ENCODE measurements at regions of chr15 and their contacts with region 1.

Region 1: GRCh38 chr15:79989682-79990081 is 18.7 kb upstream of the BCL2A1 start:
- DNase-seq: no peak
- H3K4me3 Mint-ChIP-seq: no peak overlapping the region
- H3K27ac Mint-ChIP-seq: no peak overlapping the region
- H3K4me1 Mint-ChIP-seq: peaks cover 15% of the 10 kb centered on the region
- H3K27me3 Mint-ChIP-seq: peaks cover 15% of the 10 kb centered on the region
- CTCF ChIP-seq: no peak

Region 2: DNA sequence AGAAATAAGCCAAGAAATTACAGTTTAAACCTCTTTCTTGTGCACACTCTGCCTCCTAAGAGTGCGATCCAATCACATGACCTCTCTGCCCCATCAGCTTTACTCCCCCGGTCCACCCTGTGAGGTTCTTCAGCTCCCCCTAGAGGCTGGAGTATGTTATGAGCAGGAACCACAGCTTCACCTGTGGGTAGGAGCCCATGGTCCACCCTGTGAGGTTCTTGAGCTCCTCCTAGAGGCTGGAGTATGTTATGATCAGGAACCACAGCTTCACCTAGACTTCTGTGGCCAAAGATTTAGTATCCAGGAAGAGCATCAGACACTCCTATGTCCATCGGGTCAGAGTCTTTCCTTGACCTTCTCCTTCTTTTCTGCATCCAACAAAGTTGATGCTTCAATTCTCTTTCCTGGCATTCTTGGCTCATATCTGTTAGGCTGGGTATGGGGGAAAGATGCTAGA is 393.6 kb before region 1 on chr15:
- CTCF ChIA-PET with region 1: no interaction called
- intact Hi-C with region 1: loop called (anchors 10 kb)
- DNase-seq: peak; percentile 79
- H3K4me3 Mint-ChIP-seq: no peak overlapping the region
- H3K27ac Mint-ChIP-seq: no peak overlapping the region
- H3K4me1 Mint-ChIP-seq: no peaks in the 10 kb centered on the region
- H3K27me3 Mint-ChIP-seq: peaks cover 68% of the 10 kb centered on the region
- CTCF ChIP-seq: peak; percentile 90

Region 3: DNA sequence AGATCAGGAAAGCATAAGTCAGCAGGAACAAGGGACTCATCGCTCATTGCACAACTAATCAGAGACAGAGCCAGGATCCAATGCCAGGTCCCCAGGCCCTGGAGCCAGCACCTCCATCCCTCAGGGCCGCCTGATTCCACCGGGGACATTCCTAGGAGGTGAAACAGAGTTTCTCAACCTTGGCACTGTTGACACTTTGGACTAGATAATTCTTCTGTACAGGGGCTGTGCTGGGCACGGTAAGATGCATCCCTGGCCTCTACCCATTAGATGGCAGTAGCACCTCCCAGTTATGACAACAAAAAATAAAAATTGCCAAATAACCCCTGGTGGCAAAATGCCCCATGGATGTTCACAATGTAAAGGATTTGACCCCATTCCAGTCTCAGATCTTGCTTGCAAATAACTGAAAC is 220.6 kb before region 1 on chr15:
- CTCF ChIA-PET with region 1: no interaction called
- intact Hi-C with region 1: loop called (anchors 1 kb)
- DNase-seq: peak; percentile 23
- H3K4me3 Mint-ChIP-seq: no peak overlapping the region
- H3K27ac Mint-ChIP-seq: no peak overlapping the region
- H3K4me1 Mint-ChIP-seq: no peaks in the 10 kb centered on the region
- H3K27me3 Mint-ChIP-seq: peaks cover 50% of the 10 kb centered on the region
- CTCF ChIP-seq: peak; percentile 52

Region 4: GRCh38 chr15:79896637-79897379 is 92.9 kb before region 1 on chr15 and contains the start of gene MTHFS:
- CTCF ChIA-PET with region 1: no interaction called
- intact Hi-C with region 1: loop called (anchors 5 kb)
- DNase-seq: peak; percentile 89
- H3K4me3 Mint-ChIP-seq: peak within 1 kb of the TSS; percentile 98
- H3K27ac Mint-ChIP-seq: peak within 1 kb of the TSS; percentile 99
- H3K4me1 Mint-ChIP-seq: peaks cover 23% of the 10 kb centered on the region
- H3K27me3 Mint-ChIP-seq: no peaks in the 10 kb centered on the region
- CTCF ChIP-seq: peak; percentile 57
- total RNA-seq, gene MTHFS: 66.7 and 68.0 TPM in 2 replicates

Region 5: GRCh38 chr15:79923515-79924395 is 65.9 kb before region 1 on chr15:
- CTCF ChIA-PET with region 1: no interaction called
- intact Hi-C with region 1: loop called (anchors 1 kb)
- DNase-seq: peak; percentile 100
- H3K4me3 Mint-ChIP-seq: peak overlapping the region; percentile 100
- H3K27ac Mint-ChIP-seq: peak overlapping the region; percentile 96
- H3K4me1 Mint-ChIP-seq: peaks cover 10% of the 10 kb centered on the region
- H3K27me3 Mint-ChIP-seq: peaks cover 2% of the 10 kb centered on the region
- CTCF ChIP-seq: no peak

Region 6: GRCh38 chr15:80289528-80290495 is 300.1 kb after region 1 on chr15:
- CTCF ChIA-PET with region 1: no interaction called
- intact Hi-C with region 1: no loop called
- DNase-seq: no peak
- H3K4me3 Mint-ChIP-seq: no peak overlapping the region
- H3K27ac Mint-ChIP-seq: no peak overlapping the region
- H3K4me1 Mint-ChIP-seq: peaks cover 8% of the 10 kb centered on the region
- H3K27me3 Mint-ChIP-seq: peaks cover 65% of the 10 kb centered on the region
- CTCF ChIP-seq: no peak

Measured in Calu3 (cell line).